ENCODE measurements at regions of chr4 and their contacts with region 1.

Region 1: GRCh38 chr4:109433205-109434006 is at the start of gene SEC24B:
- DNase-seq: peak; percentile 62
- ATAC-seq: peak; percentile 87
- H3K4me3 ChIP-seq: peak within 1 kb of the TSS; percentile 85
- H3K27ac ChIP-seq: peak within 1 kb of the TSS; percentile 97
- H3K4me1 ChIP-seq: peaks cover 3% of the 10 kb centered on the region
- H3K27me3 ChIP-seq: no peaks in the 10 kb centered on the region
- CTCF ChIP-seq: peak; percentile 85
- POLR2A ChIP-seq: peak; percentile 63; the same call in 1 of the 2 replicates
- RAD21 ChIP-seq: peak; percentile 46
- total RNA-seq, gene SEC24B: 19.0 and 19.4 TPM in 2 replicates

Region 2: DNA sequence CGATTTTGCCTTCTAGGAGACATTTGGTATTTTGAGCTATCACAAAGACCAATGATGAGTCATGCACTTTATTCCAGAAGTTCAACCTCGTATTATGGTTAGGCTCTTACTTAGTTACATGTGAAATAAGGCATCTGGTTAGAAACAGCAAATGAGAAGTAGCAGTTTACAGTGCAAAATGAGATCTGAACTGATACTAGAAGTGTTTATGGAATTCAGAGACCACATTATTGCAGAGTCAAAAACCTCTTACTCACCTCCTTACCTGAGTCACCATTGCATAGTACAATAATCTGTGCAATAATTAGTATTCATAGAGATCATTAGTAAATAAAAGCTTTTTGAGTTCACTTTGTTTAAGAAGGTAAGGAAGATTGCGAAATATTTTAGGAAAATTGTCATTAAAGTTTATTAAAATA is 38.9 kb after region 1 on chr4:
- CTCF ChIA-PET with region 1: no interaction called
- POLR2A ChIA-PET with region 1: interaction called, 3 read pairs
- dilution Hi-C with region 1: no loop called
- in situ Hi-C with region 1: no loop called
- intact Hi-C with region 1: loop called (anchors 2 kb)
- DNase-seq: peak; percentile 84
- ATAC-seq: peak; percentile 84
- H3K4me3 ChIP-seq: no peak overlapping the region
- H3K27ac ChIP-seq: no peak overlapping the region
- H3K4me1 ChIP-seq: peaks cover 5% of the 10 kb centered on the region
- H3K27me3 ChIP-seq: no peaks in the 10 kb centered on the region
- CTCF ChIP-seq: no peak
- POLR2A ChIP-seq: no peak
- RAD21 ChIP-seq: no peak

Region 3: DNA sequence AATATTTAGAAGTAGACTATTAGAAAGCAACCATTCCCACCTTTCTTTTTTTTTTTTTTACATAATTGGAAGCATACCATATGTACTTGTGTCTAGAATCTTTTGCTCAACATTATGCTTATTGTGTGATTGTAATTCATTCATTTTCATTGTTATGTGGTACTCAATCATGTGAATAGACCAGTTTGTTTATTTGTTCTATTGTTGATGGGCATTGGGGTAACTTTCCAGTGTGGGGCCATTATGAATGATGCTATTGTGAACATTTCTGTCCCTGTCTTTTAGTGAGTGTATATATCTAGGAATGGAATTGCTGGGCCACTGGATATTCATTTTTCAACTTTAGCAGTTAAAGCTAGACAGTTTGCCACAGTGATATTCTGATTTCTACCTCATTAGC is 64.1 kb after region 1 on chr4:
- CTCF ChIA-PET with region 1: no interaction called
- POLR2A ChIA-PET with region 1: no interaction called
- dilution Hi-C with region 1: no loop called
- in situ Hi-C with region 1: no loop called
- intact Hi-C with region 1: no loop called
- DNase-seq: no peak
- ATAC-seq: no peak
- H3K4me3 ChIP-seq: no peak overlapping the region
- H3K27ac ChIP-seq: no peak overlapping the region
- H3K4me1 ChIP-seq: no peaks in the 10 kb centered on the region
- H3K27me3 ChIP-seq: no peaks in the 10 kb centered on the region
- CTCF ChIP-seq: no peak
- POLR2A ChIP-seq: no peak
- RAD21 ChIP-seq: no peak

Region 4: DNA sequence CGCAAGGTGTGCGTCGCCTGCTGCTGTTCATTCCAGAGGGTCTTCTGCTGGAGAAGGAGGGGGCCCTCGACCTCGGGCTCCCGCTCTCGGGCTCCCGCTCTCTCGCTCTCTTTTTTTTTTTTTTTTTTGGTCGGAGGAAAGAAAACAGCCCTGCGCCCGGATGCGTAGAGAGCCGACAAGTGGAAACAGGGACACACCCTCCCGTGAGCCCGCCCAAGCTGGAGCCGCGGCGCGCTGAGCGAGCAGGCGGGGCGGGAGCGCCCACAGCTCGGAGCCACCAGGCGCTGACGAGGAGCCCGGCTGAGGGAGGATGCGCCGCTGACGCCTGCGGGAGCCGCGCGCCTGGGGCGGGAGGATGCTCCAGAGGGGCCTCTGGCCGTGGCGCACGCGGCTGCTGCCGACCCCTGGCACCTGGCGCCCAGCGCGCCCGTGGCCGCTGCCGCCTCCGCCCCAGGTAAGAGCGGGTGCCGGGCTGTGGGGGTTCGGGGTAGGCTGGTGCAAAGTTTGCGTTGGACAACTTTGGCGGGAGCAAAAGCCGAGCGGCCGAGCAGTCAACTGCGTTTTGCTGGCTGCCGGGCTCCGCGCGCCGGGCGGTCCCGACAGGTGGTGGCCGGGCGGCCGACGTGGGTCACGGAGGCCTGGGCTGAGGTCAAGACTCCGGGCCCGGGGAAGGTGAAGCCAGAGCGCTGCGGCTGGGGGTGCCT is 126.7 kb after region 1 on chr4 and contains the start of gene MCUB:
- CTCF ChIA-PET with region 1: no interaction called
- POLR2A ChIA-PET with region 1: no interaction called
- dilution Hi-C with region 1: no loop called
- in situ Hi-C with region 1: no loop called
- intact Hi-C with region 1: loop called (anchors 5 kb)
- DNase-seq: peak; percentile 89
- ATAC-seq: peak; percentile 95
- H3K4me3 ChIP-seq: peak within 1 kb of the TSS; percentile 61
- H3K27ac ChIP-seq: peak within 1 kb of the TSS; percentile 67
- H3K4me1 ChIP-seq: no peaks in the 10 kb centered on the region; the same call in 1 of the 2 replicates
- H3K27me3 ChIP-seq: no peaks in the 10 kb centered on the region
- CTCF ChIP-seq: no peak
- POLR2A ChIP-seq: no peak; the same call in 1 of the 2 replicates
- RAD21 ChIP-seq: no peak
- total RNA-seq, gene MCUB: 20.4 and 21.4 TPM in 2 replicates

Region 5: GRCh38 chr4:109729718-109730618 is 296.6 kb after region 1 on chr4 and contains the start of gene PLA2G12A:
- CTCF ChIA-PET with region 1: no interaction called
- POLR2A ChIA-PET with region 1: no interaction called
- dilution Hi-C with region 1: no loop called
- in situ Hi-C with region 1: loop called (anchors 10 kb)
- intact Hi-C with region 1: loop called (anchors 5 kb)
- DNase-seq: peak; percentile 56
- ATAC-seq: peak; percentile 96
- H3K4me3 ChIP-seq: peak within 1 kb of the TSS; percentile 93
- H3K27ac ChIP-seq: peak within 1 kb of the TSS; percentile 42
- H3K4me1 ChIP-seq: peaks cover 5% of the 10 kb centered on the region; the same call in 1 of the 2 replicates
- H3K27me3 ChIP-seq: no peaks in the 10 kb centered on the region
- CTCF ChIP-seq: no peak
- POLR2A ChIP-seq: no peak
- RAD21 ChIP-seq: no peak
- total RNA-seq, gene PLA2G12A: 8.9 and 17.4 TPM in 2 replicates

Region 6: GRCh38 chr4:109815151-109816081 is 382.0 kb after region 1 on chr4 and contains the start of gene GAR1:
- CTCF ChIA-PET with region 1: interaction called, 3 read pairs
- POLR2A ChIA-PET with region 1: no interaction called
- dilution Hi-C with region 1: no loop called
- in situ Hi-C with region 1: loop called (anchors 10 kb)
- intact Hi-C with region 1: loop called (anchors 2 kb)
- DNase-seq: peak; percentile 92
- ATAC-seq: peak; percentile 95
- H3K4me3 ChIP-seq: peak within 1 kb of the TSS; percentile 61
- H3K27ac ChIP-seq: peak within 1 kb of the TSS; percentile 78
- H3K4me1 ChIP-seq: no peaks in the 10 kb centered on the region
- H3K27me3 ChIP-seq: no peaks in the 10 kb centered on the region
- CTCF ChIP-seq: no peak
- POLR2A ChIP-seq: 0 out of 2 replicates have a peak, but pooled peaks have one; percentile 32
- RAD21 ChIP-seq: no peak
- total RNA-seq, gene GAR1: 1.1 and 4.4 TPM in 2 replicates

Region 7: GRCh38 chr4:109969919-109970318 is 536.5 kb after region 1 on chr4:
- CTCF ChIA-PET with region 1: no interaction called
- POLR2A ChIA-PET with region 1: no interaction called
- dilution Hi-C with region 1: no loop called
- in situ Hi-C with region 1: loop called (anchors 5 kb)
- intact Hi-C with region 1: no loop called
- DNase-seq: no peak
- ATAC-seq: no peak
- H3K4me3 ChIP-seq: no peak overlapping the region
- H3K27ac ChIP-seq: no peak overlapping the region
- H3K4me1 ChIP-seq: no peaks in the 10 kb centered on the region
- H3K27me3 ChIP-seq: no peaks in the 10 kb centered on the region; the same call in 1 of the 2 replicates
- CTCF ChIP-seq: no peak
- POLR2A ChIP-seq: no peak
- RAD21 ChIP-seq: no peak